Activated CD8-positive, alpha-beta T cell treated with anti-CD3 and anti-CD28 coated beads, Interleukin-2, amount 10 ng/mL, durations not matched to agents 7 days and 5 days (primary cell): ENCODE measurements at regions of chr6 and their contacts with region 1.

Region 1: GRCh38 chr6:53335208-53335994 is 13.3 kb downstream of the ELOVL5 start:
- DNase-seq: peak; percentile 84
- ATAC-seq: peak; percentile 78
- H3K4me3 Mint-ChIP-seq: peak overlapping the region; percentile 75
- H3K27ac Mint-ChIP-seq: peak overlapping the region; percentile 94
- H3K4me1 Mint-ChIP-seq: peaks cover 82% of the 10 kb centered on the region
- H3K27me3 Mint-ChIP-seq: no peaks in the 10 kb centered on the region

Region 2: DNA sequence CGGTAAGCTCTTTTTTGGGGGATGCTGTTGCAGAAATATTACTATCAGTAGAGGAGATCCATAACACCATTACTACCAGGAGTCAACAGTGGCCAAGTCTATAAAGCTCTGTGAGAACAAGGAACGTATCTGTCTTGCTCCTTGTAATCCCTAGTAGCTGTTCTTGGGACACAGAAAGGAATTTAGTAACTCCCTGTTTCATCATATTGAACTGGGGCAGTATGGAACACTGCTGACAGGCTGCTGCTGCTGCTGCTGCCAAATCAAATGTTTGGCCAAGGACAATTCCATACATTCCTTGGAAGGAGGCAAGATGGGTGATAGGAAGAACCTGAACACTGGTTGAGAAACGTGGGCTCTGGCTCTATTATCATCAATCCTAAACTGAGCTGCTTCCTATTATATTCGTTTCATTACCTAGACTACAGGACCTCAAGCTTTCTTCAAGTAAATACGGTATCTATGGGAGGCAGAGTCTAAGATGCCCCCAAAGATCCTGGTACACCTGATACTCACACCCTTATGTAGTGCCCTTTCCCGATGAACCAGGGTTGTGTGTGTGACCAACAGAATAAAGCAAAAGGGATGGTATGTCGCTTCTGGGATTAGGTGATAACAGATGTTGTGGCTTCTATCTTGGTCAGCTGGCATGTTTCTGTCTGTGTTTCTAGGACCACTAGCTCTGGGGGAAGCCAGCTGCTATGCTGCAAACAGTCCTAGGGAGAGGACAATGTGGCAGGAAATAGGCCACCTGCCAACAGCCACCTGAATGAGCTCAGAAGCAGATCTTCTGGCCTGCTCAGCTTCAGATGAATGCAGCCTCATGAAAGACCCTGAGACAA is 26.1 kb before region 1 on chr6:
- CTCF ChIA-PET with region 1: interaction called, 8 read pairs
- POLR2A ChIA-PET with region 1: interaction called, 13 read pairs
- DNase-seq: no peak
- ATAC-seq: peak; percentile 46
- H3K4me3 Mint-ChIP-seq: no peak overlapping the region
- H3K27ac Mint-ChIP-seq: peak overlapping the region; percentile 45
- H3K4me1 Mint-ChIP-seq: peaks cover 80% of the 10 kb centered on the region
- H3K27me3 Mint-ChIP-seq: no peaks in the 10 kb centered on the region

Region 3: GRCh38 chr6:53359072-53359842 is 23.9 kb after region 1 on chr6:
- CTCF ChIA-PET with region 1: no interaction called
- POLR2A ChIA-PET with region 1: interaction called, 12 read pairs
- DNase-seq: peak; percentile 92
- ATAC-seq: peak; percentile 96
- H3K4me3 Mint-ChIP-seq: peak overlapping the region; percentile 87
- H3K27ac Mint-ChIP-seq: peak overlapping the region; percentile 98
- H3K4me1 Mint-ChIP-seq: peaks cover 47% of the 10 kb centered on the region
- H3K27me3 Mint-ChIP-seq: peaks cover 6% of the 10 kb centered on the region